ENCODE measurements at regions of chr4 and their contacts with region 1.

Region 1: GRCh38 chr4:151362404-151363164 is 37.2 kb upstream of the SH3D19 start:
- DNase-seq: peak; percentile 66
- H3K4me3 Mint-ChIP-seq: no peak overlapping the region
- H3K27ac Mint-ChIP-seq: no peak overlapping the region
- H3K4me1 Mint-ChIP-seq: no peaks in the 10 kb centered on the region
- H3K27me3 Mint-ChIP-seq: peaks cover 14% of the 10 kb centered on the region

Region 2: GRCh38 chr4:151117371-151117962 is 245.1 kb before region 1 on chr4:
- intact Hi-C with region 1: loop called (anchors 1 kb)
- DNase-seq: peak; percentile 36
- H3K4me3 Mint-ChIP-seq: no peak overlapping the region
- H3K27ac Mint-ChIP-seq: no peak overlapping the region
- H3K4me1 Mint-ChIP-seq: peaks cover 4% of the 10 kb centered on the region
- H3K27me3 Mint-ChIP-seq: no peaks in the 10 kb centered on the region

Region 3: GRCh38 chr4:151276787-151277562 is 85.6 kb before region 1 on chr4 and contains the start of gene PRSS48:
- intact Hi-C with region 1: loop called (anchors 10 kb)
- DNase-seq: peak; percentile 18
- H3K4me3 Mint-ChIP-seq: no peak within 1 kb of the TSS
- H3K27ac Mint-ChIP-seq: no peak within 1 kb of the TSS
- H3K4me1 Mint-ChIP-seq: no peaks in the 10 kb centered on the region
- H3K27me3 Mint-ChIP-seq: no peaks in the 10 kb centered on the region
- total RNA-seq, gene PRSS48: not detected in 2 replicates